ENCODE measurements at regions of chr5 and their contacts with region 1.

Region 1: DNA sequence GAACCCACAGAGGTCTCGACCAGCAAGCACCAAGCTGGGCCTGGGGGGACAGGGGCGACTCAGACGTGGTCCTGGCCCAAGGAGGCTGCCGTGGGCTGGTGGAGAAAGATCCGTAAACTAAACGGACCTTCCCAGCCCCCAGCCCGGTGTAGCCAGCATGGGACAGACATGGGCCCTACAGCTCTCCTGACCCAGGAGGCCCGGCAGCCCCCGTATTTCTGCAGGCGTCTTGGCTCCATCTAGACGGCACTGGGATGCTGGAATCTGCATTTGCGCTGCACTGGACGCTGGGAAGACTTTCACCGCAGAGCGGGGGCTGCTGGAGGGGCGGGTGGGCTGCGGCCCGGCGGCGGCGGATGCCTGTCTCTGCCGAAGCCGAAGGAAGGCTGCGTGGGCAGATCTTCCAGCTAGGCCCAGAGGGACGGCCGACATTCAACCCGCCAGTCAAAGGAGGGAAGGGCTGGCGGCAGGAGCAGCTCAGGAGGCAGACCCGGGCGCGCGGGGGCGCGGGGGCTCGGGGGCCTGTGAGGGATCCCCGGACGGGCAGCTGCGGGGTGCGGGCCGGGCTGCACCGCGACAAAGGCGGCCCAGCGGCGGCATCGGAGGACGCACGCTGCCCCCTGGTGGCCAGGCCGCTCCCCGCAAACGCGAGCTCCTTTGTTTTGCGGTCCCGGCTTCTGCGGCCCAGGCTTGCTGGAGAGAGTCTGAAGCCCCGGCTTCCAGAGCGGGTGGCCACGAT is 266.2 kb downstream of the NSG2 start:
- DNase-seq: peak in 1 of 2 experiments; percentile 97
- H3K4me3 ChIP-seq: peak overlapping the region; percentile 22 to 68 (median 34)
- H3K27ac ChIP-seq: no peak overlapping the region
- H3K4me1 ChIP-seq: peaks cover 0 to 7% (median 0%) of the 10 kb centered on the region in 4 experiments; a peak in 1 of 7 replicates
- H3K27me3 ChIP-seq: peaks cover 0 to 13% (median 7%) of the 10 kb centered on the region in 4 experiments; a peak in 5 of 7 replicates
- CTCF ChIP-seq: peak; percentile 82 to 89 (median 85)
- EP300 ChIP-seq: no peak
- POLR2A ChIP-seq: no peak
- RAD21 ChIP-seq: peak; percentile 87 to 89

Region 2: DNA sequence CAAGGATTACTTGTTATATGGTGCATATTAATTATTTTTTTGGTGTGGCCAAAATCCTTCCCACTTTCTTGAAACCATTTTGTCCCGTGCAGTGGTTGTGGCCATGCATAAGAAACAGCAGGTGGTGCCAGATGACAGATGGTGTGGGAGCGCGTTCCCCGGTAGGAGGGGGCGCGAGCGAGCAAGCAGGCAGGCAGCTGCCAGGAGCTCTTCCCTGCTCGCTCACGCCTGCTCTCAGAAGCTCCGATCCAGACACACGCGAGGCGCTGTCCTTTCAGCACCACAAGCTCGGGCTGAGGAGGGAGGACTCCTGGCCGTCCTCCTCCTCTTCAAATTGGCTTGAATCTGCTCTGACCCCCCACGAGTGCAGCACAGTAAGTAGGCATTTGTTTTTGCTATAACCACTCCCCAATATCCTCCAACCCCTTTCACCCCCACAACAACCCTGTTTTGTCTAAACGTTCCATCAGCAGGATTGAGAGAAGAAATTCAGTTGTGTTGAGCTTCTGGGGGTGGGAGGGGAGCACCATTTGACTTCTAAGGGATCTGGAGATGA is 266.2 kb before region 1 on chr5 and contains the start of gene NSG2:
- CTCF ChIA-PET with region 1: interaction called, 187 read pairs
- POLR2A ChIA-PET with region 1: interaction called, 9 read pairs
- DNase-seq: peak; percentile 83 to 87
- H3K4me3 ChIP-seq: no peak within 1 kb of the TSS
- H3K27ac ChIP-seq: no peak within 1 kb of the TSS
- H3K4me1 ChIP-seq: no peaks in the 10 kb centered on the region
- H3K27me3 ChIP-seq: no peaks in the 10 kb centered on the region
- CTCF ChIP-seq: peak; percentile 80 to 95 (median 81)
- EP300 ChIP-seq: no peak
- POLR2A ChIP-seq: no peak
- RAD21 ChIP-seq: peak; percentile 98 to 100
- total RNA-seq, gene NSG2: 0.34 and 0.78 TPM in 2 replicates

Region 3: GRCh38 chr5:174056064-174056847 is 255.4 kb before region 1 on chr5:
- CTCF ChIA-PET with region 1: interaction called, 174 read pairs
- POLR2A ChIA-PET with region 1: interaction called, 4 read pairs
- DNase-seq: no peak
- H3K4me3 ChIP-seq: no peak overlapping the region
- H3K27ac ChIP-seq: no peak overlapping the region
- H3K4me1 ChIP-seq: no peaks in the 10 kb centered on the region
- H3K27me3 ChIP-seq: no peaks in the 10 kb centered on the region
- CTCF ChIP-seq: peak in 1 of 3 experiments; percentile 40; a peak in 2 of 4 replicates
- EP300 ChIP-seq: no peak
- POLR2A ChIP-seq: no peak
- RAD21 ChIP-seq: peak; percentile 9 to 30; a peak in 2 of 4 replicates

Region 4: DNA sequence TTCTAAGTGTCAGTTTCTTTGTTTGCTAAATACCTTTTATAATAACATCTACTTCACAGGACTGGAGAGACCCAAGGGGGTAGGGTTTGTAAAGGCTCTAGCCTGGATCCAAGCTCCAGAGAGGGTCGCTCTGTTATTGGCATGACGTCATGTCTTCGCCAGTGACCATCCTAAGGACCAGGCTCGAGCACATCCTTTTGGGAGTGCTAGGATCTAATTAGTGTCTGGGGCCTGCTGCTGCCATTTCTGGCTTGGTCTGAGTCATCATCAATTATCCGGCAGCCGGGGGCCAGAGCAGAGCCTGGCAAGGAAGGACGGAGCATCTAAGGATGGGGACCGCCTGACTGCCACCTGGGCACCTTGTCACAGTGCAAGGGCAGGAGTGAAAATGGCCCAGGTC is 113.2 kb before region 1 on chr5:
- CTCF ChIA-PET with region 1: no interaction called
- POLR2A ChIA-PET with region 1: no interaction called
- DNase-seq: no peak
- H3K4me3 ChIP-seq: no peak overlapping the region
- H3K27ac ChIP-seq: no peak overlapping the region
- H3K4me1 ChIP-seq: peaks cover 0 to 8% (median 3%) of the 10 kb centered on the region in 4 experiments; a peak in 4 of 7 replicates
- H3K27me3 ChIP-seq: no peaks in the 10 kb centered on the region
- CTCF ChIP-seq: no peak
- EP300 ChIP-seq: no peak
- POLR2A ChIP-seq: no peak
- RAD21 ChIP-seq: no peak

Region 5: DNA sequence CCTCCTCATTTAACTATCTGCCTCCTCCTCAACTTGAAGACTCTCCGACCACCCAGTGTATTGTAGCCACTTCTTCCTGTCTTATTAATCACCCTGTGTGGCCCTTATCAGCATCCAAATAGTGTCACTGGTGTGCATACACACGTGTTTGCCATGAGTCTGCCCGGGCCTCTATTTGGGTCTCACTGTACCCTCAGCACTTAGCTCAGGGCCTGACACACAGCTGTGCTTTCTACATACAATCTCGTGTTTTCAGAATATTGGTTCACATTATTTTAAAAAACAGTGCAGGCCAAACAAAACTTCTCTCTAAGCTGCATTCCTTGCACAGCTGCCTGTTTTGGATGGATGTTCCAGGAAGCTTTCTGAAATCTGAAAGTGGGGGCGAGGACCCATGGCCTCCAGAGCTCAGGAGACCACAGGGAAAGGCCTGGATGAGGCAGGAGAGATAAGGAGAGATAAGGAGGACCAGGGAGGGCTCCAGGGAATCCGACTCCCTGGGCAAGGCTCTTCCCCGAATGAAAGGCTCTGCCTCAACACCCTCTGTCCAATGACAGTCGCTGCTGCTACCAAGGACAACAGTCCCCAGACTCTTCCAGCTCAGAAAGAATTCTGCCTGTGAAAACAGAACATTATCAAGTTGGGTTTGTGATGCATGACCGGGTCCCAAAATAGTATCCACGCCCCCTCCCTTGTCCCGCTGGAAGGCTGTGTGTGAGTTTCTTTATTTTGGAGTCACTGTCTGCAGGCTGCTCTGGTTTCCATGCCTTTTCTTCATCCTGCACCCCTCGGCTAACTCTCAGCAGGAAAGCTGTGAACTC is 10.5 kb before region 1 on chr5:
- CTCF ChIA-PET with region 1: interaction called, 22 read pairs
- POLR2A ChIA-PET with region 1: interaction called, 3 read pairs
- DNase-seq: peak in 1 of 2 experiments; percentile 44
- H3K4me3 ChIP-seq: 0 out of 8 replicates have a peak overlapping the region, but pooled peaks of 1 of the 4 experiments have one; percentile 8
- H3K27ac ChIP-seq: no peak overlapping the region
- H3K4me1 ChIP-seq: peaks cover 2 to 12% (median 8%) of the 10 kb centered on the region in 4 experiments; a peak in 5 of 7 replicates
- H3K27me3 ChIP-seq: peaks cover 0 to 3% (median 1%) of the 10 kb centered on the region in 4 experiments; a peak in 1 of 7 replicates
- CTCF ChIP-seq: no peak
- EP300 ChIP-seq: no peak
- POLR2A ChIP-seq: no peak
- RAD21 ChIP-seq: no peak

Region 6: DNA sequence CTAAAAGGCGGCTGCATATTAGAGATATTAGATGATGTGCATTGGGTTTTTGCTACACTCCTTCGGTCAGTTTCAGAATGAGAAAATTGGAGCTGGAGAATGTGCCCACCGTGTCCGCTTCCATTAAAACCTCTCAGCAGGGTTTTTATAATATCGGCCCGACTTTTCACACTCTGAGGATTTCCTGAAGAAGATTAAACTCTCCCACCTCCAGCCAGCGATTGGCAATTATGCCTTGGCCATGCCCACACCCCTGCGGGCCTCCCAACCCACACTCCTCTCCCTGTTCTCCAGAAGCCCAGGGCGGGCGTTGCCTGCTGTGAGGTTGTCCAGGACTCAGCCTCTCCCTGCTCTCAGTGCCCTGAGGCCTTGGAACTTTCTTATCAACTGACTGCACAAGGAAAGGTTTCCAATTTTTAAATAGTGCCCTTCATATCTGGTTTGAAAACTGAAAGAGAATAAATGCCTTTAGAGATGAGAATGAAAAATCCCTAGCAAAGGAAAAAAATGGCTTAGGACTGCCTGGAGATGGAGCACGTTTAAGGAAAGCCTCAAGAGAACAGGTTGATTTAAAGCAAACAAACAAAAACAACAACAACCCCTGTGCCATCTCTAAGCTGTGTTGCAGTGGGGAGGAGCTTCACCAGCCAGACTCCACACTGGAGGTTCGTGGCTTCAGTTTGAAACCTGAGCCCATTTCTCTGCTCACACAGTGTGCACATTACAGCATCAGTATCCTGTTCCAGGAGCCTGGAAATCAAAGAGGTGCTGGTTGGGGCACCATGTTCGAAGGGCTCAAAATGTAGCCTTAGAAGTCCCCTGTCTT is 26.7 kb after region 1 on chr5:
- CTCF ChIA-PET with region 1: no interaction called
- POLR2A ChIA-PET with region 1: no interaction called
- DNase-seq: no peak
- H3K4me3 ChIP-seq: no peak overlapping the region
- H3K27ac ChIP-seq: no peak overlapping the region
- H3K4me1 ChIP-seq: peaks cover 0 to 5% (median 2%) of the 10 kb centered on the region in 4 experiments; a peak in 2 of 7 replicates
- H3K27me3 ChIP-seq: no peaks in the 10 kb centered on the region
- CTCF ChIP-seq: no peak
- EP300 ChIP-seq: no peak
- POLR2A ChIP-seq: no peak
- RAD21 ChIP-seq: no peak

Region 7: DNA sequence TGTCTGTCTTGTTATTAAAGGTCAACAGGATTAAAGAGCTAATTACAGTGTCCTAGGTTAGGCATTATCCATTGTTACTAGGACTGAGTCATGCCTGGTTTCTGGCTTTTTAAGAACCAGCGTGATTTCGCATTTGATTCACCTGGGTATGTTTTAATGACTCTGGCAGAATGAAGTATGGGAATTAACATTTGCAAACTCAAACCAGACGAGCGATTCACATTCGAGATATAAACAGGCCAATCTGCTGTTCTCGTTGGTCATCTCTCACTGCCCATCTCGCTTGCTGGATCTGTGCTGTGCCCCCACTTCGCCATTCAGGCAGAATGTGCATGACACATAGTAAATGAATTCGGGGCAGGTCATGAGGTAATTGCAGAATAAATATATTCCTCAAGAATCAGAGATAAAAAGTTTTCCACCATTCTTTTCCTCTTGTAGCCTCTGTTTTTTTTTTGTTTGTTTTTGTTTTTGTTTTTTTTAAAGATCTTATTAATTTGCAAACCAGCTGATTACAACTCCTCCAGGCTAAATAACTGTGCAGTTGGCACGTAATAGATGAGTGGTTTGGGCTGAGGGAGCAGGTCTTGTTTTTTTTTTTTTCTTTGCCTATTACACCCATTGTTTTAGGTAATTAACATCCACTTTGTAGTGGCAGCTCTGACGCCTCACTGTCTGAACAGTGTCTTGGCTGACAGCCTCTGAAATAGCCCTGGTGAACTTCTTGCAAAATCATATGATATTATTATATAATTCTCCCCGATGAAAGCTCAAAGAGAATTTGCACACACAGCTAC is 99.2 kb after region 1 on chr5:
- CTCF ChIA-PET with region 1: no interaction called
- POLR2A ChIA-PET with region 1: no interaction called
- DNase-seq: no peak
- H3K4me3 ChIP-seq: no peak overlapping the region
- H3K27ac ChIP-seq: no peak overlapping the region
- H3K4me1 ChIP-seq: no peaks in the 10 kb centered on the region
- H3K27me3 ChIP-seq: no peaks in the 10 kb centered on the region
- CTCF ChIP-seq: no peak
- EP300 ChIP-seq: no peak
- POLR2A ChIP-seq: no peak
- RAD21 ChIP-seq: no peak